ENCODE measurements at regions of chr1 and their contacts with region 1.

Region 1: DNA sequence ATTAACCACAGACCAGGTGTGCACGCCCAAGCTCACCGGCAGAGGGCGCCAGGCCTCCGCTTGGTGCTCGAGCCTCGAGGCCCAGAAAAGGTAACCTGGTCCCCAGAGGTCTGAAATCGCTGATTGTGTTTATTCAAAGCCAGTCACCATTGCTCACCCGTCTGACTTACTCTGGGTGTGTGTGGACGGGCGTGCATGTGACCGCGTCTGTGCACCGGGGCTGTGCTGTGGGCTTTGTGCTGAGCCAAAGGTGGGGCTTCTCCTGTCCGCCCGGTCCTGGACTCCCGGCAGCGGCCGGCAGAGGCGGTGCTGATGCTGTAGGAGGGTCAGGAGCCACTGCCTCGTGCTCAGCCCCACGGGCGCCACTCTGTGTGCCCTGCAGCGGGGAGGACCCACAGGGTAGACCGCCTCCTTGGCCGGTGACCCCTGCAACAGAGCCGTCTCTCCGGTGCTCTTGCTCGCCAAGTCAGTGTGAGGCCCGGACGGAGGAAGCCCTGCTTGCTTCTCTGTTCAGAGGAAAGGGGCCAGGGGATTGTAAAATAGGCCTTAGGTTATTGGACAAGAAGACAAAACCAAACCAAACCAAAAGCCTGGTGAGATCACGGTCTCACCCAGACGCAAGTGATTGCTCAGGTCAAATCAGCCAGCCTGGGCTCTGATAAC is 32.0 kb upstream of the BTG2 start:
- DNase-seq: peak; percentile 93
- H3K4me3 ChIP-seq: peak overlapping the region; percentile 6 to 46
- H3K27ac ChIP-seq: peak overlapping the region; percentile 78 to 83
- H3K4me1 ChIP-seq: peaks cover 50% of the 10 kb centered on the region
- H3K27me3 ChIP-seq: no peaks in the 10 kb centered on the region
- CTCF ChIP-seq: peak; percentile 98 to 99 (median 98)
- POLR2A ChIP-seq: no peak

Region 2: GRCh38 chr1:203326830-203327683 is 53.7 kb after region 1 on chr1:
- intact Hi-C with region 1: loop called (anchors 5 kb)
- DNase-seq: peak; percentile 94
- H3K4me3 ChIP-seq: peak overlapping the region; percentile 57 to 66
- H3K27ac ChIP-seq: peak overlapping the region; percentile 78 to 91
- H3K4me1 ChIP-seq: peaks cover 13% of the 10 kb centered on the region
- H3K27me3 ChIP-seq: no peaks in the 10 kb centered on the region
- CTCF ChIP-seq: no peak
- POLR2A ChIP-seq: peak; percentile 24

Region 3: DNA sequence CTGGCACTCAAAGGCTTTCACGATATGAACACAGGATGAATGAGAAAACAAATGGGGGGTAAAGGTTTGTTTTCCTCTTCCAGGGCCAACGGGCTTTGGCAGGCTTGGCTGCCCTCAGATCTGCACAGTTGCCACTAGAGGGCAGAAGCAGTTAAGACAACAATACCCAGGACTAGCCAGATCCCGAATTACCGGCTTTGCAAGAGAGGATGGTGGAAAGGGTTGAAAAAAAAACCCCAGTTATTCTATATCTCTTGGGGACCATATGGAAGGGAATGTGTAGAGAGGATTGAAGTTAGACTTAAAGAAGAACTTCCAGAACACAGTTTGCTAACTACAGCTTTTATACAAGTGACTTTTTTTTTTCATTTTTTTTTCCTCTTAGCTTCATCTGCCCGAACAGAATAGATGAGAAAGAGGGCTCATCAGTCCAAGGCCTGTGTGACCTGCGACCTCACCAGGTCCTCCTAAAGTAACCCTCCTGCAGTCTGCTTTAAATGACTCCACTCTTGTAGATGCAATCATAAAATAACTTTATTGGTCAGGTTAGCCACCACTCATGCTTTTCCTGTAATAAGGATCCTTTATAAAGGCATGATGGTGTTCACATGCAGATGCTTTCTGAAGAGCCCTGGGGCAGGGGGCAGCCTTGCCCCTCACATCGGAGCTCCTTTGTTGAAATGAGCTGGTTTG is 66.9 kb after region 1 on chr1:
- intact Hi-C with region 1: loop called (anchors 5 kb)
- DNase-seq: peak; percentile 84
- H3K4me3 ChIP-seq: no peak overlapping the region
- H3K27ac ChIP-seq: peak overlapping the region; percentile 39 to 51
- H3K4me1 ChIP-seq: peaks cover 24% of the 10 kb centered on the region
- H3K27me3 ChIP-seq: no peaks in the 10 kb centered on the region
- CTCF ChIP-seq: peak; percentile 78 to 83 (median 83)
- POLR2A ChIP-seq: no peak

Region 4: GRCh38 chr1:203361945-203362719 is 88.8 kb after region 1 on chr1:
- intact Hi-C with region 1: no loop called
- DNase-seq: no peak
- H3K4me3 ChIP-seq: no peak overlapping the region
- H3K27ac ChIP-seq: no peak overlapping the region
- H3K4me1 ChIP-seq: no peaks in the 10 kb centered on the region
- H3K27me3 ChIP-seq: no peaks in the 10 kb centered on the region
- CTCF ChIP-seq: no peak
- POLR2A ChIP-seq: no peak

Region 5: DNA sequence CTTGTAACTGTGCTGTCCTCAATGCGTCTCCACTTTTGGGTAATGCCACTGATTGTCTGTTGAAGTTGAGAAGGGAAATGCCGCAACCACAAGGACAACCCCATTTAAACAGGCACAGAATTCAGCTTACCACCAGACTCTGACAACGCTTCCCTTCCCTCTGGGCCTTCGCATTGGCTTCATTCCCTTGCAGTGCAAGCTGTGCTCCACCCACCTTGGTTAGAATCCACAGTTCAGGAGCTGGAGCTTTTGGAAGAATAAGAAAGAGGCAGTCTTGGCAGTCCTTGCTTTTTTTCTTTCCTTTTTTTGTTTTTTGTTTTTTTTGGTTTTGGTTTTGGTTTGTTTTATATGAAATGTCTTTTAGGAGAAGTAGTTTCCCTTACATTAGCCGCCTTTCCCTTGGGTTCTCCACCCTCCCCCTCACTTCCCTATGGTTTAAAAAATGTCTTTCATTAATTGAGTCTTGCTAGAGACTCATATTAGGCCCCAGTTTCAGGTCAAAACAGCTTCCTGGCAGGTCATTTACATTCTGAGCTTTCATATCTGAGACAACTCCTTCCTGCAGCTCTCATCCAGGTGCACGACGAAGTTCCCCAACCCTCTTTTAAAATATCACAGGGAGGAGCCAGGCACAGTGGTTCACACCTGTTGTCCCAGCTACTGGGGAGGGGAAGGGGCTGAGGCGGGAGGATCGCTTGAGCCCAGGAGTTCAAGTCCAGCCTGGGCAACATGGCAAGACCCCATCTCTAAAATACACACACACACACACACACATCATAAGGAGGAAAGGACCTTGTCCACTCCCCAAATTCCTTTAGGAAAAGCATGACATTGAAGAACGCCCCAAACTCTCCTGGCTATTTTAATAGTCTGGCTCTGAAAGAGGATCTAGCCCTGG is 471.0 kb after region 1 on chr1:
- intact Hi-C with region 1: no loop called
- DNase-seq: peak; percentile 69
- H3K4me3 ChIP-seq: no peak overlapping the region
- H3K27ac ChIP-seq: peak overlapping the region in 1 of 2 donors; percentile 9
- H3K4me1 ChIP-seq: no peaks in the 10 kb centered on the region
- H3K27me3 ChIP-seq: no peaks in the 10 kb centered on the region
- CTCF ChIP-seq: no peak
- POLR2A ChIP-seq: no peak

Region 6: DNA sequence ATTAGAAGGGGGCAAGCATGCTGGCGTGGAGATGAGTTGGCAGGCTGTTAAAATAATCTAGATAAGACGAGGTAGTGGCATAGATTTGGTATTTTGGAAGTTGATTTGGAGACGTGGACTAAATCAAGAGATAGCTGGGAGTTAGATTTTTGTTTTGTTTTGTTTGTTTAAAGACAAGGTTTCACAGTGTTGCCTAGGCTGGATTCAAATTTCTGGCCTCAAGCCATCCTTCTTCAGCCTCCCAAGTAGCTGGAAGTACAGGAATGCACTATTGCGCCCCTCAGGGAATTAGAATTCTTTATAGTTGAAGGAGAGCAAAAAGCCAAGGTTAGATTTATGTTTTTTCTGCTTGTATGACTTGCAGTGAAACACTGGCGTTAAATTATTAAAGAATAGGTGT is 565.7 kb after region 1 on chr1:
- intact Hi-C with region 1: no loop called
- DNase-seq: peak; percentile 51
- H3K4me3 ChIP-seq: no peak overlapping the region
- H3K27ac ChIP-seq: peak overlapping the region; percentile 42 to 67
- H3K4me1 ChIP-seq: peaks cover 16% of the 10 kb centered on the region
- H3K27me3 ChIP-seq: no peaks in the 10 kb centered on the region
- CTCF ChIP-seq: no peak
- POLR2A ChIP-seq: no peak